Activated CD4-positive, alpha-beta T cell treated with anti-CD3 and anti-CD28 coated beads for 36 hours (primary cell): ENCODE measurements at regions of chr5 and their contacts with region 1.

Region 1: DNA sequence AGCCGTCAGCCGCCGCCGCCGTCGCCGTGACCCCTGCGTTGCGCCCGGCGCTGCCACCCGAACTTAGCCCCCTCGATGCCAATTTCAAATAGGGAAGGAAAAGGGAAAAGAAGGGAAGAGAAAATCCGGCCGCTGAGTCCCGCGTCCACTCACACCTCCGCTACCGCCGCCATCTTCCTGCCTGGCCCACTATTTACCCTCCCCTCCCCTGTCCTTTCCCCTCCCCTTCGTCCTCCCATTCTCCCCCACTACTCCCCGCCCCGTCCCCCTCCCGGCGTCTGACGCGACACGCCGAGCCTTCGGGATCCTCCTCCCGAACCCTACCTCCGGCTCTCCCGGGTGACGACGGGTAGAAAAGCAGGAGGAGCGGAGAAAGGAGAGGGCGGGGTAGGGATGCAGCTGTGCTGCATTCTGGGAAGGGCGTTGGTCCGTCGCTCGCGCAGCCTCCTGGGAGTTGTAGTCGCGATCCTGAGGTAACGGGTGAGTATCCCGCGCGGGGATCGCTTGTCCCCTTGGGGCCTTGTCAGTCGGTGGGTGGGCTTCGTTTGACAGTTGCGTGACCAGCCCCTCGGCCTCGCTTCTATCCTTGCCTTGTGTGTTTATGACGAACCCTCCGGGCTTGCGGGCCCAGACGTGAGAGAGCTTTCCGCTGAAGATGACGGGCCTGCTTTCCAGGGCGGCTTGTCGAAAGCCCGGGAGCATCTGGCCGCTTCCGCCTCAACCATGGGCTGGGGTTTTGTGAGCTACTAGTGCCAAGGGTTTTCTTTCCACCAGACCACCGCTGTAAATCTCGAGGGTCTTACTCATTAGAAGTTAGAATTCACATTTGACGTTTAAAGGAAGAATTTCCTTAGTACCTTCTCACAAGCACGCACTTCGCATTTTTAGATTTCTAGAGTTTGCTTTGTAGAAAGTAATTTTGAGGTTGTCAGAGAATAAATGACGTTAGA is at the starts of genes CERT1 and POLK:
- DNase-seq: peak; percentile 98
- ATAC-seq: peak; percentile 96
- H3K4me3 Mint-ChIP-seq: peak within 1 kb of the TSS; percentile 98
- H3K27ac Mint-ChIP-seq: peak within 1 kb of the TSS; percentile 96
- H3K4me1 Mint-ChIP-seq: peaks cover 47% of the 10 kb centered on the region
- H3K27me3 Mint-ChIP-seq: no peaks in the 10 kb centered on the region
- total RNA-seq, gene CERT1: 21.6 to 24.5 TPM
- total RNA-seq, gene POLK: 35.5 to 49.1 TPM

Region 2: DNA sequence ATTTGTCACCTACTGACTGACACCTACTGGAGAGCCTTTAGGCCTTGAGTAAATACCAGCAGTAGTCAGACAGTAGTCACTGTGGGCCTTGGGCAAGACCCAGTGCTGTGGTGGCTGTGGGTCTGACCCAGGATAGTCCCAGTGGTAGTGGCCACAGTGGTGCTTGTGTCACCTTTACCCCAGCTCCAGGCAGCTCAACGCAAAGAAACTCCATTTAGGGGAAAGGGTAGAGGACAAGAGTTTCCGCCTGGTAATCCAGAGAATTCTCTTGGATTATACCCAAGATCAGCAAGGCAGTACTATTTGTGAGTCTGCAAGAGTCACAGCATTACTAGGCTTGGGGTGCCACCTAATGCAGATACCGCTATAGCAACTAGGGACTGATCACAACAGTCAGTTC is 29.2 kb before region 1 on chr5:
- CTCF ChIA-PET with region 1: no interaction called
- POLR2A ChIA-PET with region 1: no interaction called
- intact Hi-C with region 1: no loop called
- DNase-seq: no peak
- ATAC-seq: no peak
- H3K4me3 Mint-ChIP-seq: no peak overlapping the region
- H3K27ac Mint-ChIP-seq: no peak overlapping the region
- H3K4me1 Mint-ChIP-seq: peaks cover 27% of the 10 kb centered on the region
- H3K27me3 Mint-ChIP-seq: no peaks in the 10 kb centered on the region

Region 3: GRCh38 chr5:75566710-75567309 is 55.1 kb after region 1 on chr5:
- CTCF ChIA-PET with region 1: interaction called, 3 read pairs
- POLR2A ChIA-PET with region 1: interaction called, 12 read pairs
- intact Hi-C with region 1: loop called (anchors 1 kb)
- DNase-seq: peak; percentile 78
- ATAC-seq: peak; percentile 85
- H3K4me3 Mint-ChIP-seq: peak overlapping the region; percentile 56
- H3K27ac Mint-ChIP-seq: peak overlapping the region; percentile 96
- H3K4me1 Mint-ChIP-seq: peaks cover 63% of the 10 kb centered on the region
- H3K27me3 Mint-ChIP-seq: no peaks in the 10 kb centered on the region

Region 4: DNA sequence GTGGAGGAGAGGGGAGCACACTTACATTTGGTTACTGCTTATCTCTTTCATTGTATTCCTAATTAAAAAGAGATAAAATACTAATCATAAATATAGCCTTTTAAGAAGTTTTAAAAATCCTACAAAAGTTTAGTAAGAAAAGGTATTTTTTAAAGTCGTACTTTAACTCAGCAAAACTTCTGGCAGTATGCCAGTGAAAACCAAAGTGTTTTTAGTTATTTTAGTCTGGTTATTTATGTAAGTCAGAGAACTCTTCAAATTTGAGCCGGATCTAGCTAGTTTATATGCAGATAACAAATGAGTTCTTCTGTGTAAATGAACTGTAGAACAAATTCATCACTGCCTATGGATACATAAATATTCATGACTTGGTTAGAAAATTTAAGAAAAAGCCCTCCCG is 63.1 kb after region 1 on chr5:
- CTCF ChIA-PET with region 1: no interaction called
- POLR2A ChIA-PET with region 1: no interaction called
- intact Hi-C with region 1: loop called in 1 of 2 experiments (anchors 2 kb)
- DNase-seq: no peak
- ATAC-seq: no peak
- H3K4me3 Mint-ChIP-seq: no peak overlapping the region
- H3K27ac Mint-ChIP-seq: peak overlapping the region; percentile 82
- H3K4me1 Mint-ChIP-seq: peaks cover 20% of the 10 kb centered on the region
- H3K27me3 Mint-ChIP-seq: no peaks in the 10 kb centered on the region

Region 5: GRCh38 chr5:75681125-75681830 is 169.6 kb after region 1 on chr5:
- CTCF ChIA-PET with region 1: interaction called, 7 read pairs
- POLR2A ChIA-PET with region 1: no interaction called
- intact Hi-C with region 1: loop called in 1 of 2 experiments (anchors 2 kb)
- DNase-seq: no peak
- ATAC-seq: peak; percentile 45
- H3K4me3 Mint-ChIP-seq: no peak overlapping the region
- H3K27ac Mint-ChIP-seq: no peak overlapping the region
- H3K4me1 Mint-ChIP-seq: peaks cover 13% of the 10 kb centered on the region
- H3K27me3 Mint-ChIP-seq: no peaks in the 10 kb centered on the region

Region 6: GRCh38 chr5:77103457-77103856 is 1591.7 kb after region 1 on chr5:
- CTCF ChIA-PET with region 1: no interaction called
- POLR2A ChIA-PET with region 1: no interaction called
- intact Hi-C with region 1: no loop called
- DNase-seq: no peak
- ATAC-seq: no peak
- H3K4me3 Mint-ChIP-seq: no peak overlapping the region
- H3K27ac Mint-ChIP-seq: no peak overlapping the region
- H3K4me1 Mint-ChIP-seq: peaks cover 9% of the 10 kb centered on the region
- H3K27me3 Mint-ChIP-seq: no peaks in the 10 kb centered on the region